ENCODE measurements at regions of chr6 and their contacts with region 1.

Region 1: DNA sequence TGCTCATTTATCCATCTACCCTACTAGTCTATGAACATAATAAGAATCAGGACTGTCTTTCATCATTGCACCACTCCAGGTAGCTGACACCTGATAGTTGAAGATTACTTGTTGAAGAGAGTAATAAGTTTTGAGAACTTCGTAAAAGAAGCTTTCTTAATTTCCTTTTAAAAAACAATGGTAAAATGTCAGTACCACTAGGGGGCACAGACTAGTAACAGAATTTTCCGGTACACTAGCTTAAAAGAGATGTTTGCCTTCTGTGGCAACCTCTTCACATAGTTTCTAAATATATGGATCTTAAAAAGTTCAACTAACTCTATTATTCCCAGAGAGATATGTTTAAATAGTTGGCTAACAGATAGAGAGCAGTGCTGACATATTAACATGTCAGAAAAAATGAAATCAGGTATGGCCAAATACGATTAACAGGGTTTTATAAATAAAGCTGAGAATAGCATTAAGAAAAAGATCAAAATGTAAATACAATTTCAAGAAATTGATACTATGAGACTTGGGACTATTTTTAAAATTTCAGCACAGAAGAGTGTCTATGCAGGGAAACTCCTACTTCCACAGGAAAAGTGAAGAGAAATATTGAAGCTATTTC is 5.4 kb upstream of the KCNQ5 start:
- DNase-seq: no peak
- H3K4me3 Mint-ChIP-seq: no peak overlapping the region
- H3K27ac Mint-ChIP-seq: no peak overlapping the region
- H3K4me1 Mint-ChIP-seq: peaks cover 45% of the 10 kb centered on the region
- H3K27me3 Mint-ChIP-seq: peaks cover 1% of the 10 kb centered on the region

Region 2: GRCh38 chr6:72588155-72588554 is 28.4 kb before region 1 on chr6:
- intact Hi-C with region 1: loop called (anchors 1 kb)
- DNase-seq: no peak
- H3K4me3 Mint-ChIP-seq: no peak overlapping the region
- H3K27ac Mint-ChIP-seq: no peak overlapping the region
- H3K4me1 Mint-ChIP-seq: peaks cover 12% of the 10 kb centered on the region
- H3K27me3 Mint-ChIP-seq: peaks cover 13% of the 10 kb centered on the region

Region 3: DNA sequence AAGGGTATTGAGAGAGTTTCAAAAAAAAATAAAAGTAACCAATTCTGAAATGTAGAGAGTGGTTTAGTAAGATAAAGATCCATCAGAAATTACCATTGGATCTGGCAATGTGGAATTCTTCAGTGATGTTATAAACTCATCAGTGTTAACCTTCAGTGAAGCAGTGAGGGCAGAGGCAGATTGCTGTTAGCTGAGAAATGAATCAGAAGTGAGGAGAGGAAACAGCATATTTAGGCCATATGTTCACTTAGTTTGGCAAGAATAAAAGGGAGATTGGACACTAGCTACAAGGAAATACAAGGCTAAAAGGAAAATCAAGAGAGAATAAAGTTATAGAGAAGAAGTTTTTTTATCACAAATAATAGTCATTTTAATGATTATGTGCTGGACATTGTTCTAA is 15.0 kb after region 1 on chr6:
- intact Hi-C with region 1: no loop called
- DNase-seq: no peak
- H3K4me3 Mint-ChIP-seq: no peak overlapping the region
- H3K27ac Mint-ChIP-seq: no peak overlapping the region
- H3K4me1 Mint-ChIP-seq: peaks cover 21% of the 10 kb centered on the region
- H3K27me3 Mint-ChIP-seq: no peaks in the 10 kb centered on the region

Region 4: DNA sequence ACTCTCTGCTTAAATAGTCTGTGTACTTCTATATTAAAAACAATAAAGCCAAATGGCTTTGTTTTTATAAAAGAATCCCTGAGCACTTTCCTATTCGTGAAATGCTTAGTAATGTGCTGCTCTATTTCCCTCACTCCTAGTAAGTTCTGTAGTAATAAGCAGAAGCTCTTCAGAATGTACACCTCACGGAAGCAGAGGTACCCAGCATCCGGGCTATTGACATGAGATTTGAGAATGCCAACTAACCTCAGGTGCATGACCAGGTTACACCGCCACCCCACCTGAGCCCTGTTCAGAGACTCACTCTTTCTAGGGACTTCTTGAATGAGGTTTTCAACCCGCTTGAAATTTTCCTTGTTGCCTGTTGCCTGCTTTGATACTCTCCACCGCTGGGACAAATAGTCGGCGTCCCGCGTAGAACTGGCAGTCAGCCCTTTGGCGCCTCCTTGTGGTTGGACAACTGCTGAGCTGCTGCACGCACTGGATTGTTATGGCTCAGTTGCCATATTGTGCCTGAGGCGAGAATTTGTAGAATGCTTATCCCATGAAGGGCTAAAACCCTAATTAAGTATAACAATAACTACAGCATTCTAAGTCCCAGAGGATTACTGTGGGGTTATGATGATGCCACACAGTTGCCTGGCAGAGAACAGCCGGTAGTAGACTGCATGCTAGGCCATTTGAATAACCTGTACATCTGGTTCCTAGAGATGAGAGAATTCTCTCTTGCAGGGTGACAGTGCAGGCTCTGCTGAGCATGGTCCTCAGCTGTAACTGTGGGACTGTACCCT is 513.3 kb after region 1 on chr6:
- intact Hi-C with region 1: loop called (anchors 1 kb)
- DNase-seq: peak; percentile 70
- H3K4me3 Mint-ChIP-seq: no peak overlapping the region
- H3K27ac Mint-ChIP-seq: no peak overlapping the region
- H3K4me1 Mint-ChIP-seq: peaks cover 5% of the 10 kb centered on the region
- H3K27me3 Mint-ChIP-seq: peaks cover 9% of the 10 kb centered on the region

Measured in activated T-helper 2 cell treated with anti-CD3 and anti-CD28 coated beads, Interferon-gamma antibody, Interleukin-2, Interleukin-4, amounts not matched to agents 10 μg/mL and 5 μg/mL and 100 μg/mL, durations not matched to agents 14 hours and 24 hours and 36 hours (primary cell).